Naive thymus-derived CD8-positive, alpha-beta T cell (primary cell): ENCODE measurements at regions of chr17 and their contacts with region 1.

Region 1: DNA sequence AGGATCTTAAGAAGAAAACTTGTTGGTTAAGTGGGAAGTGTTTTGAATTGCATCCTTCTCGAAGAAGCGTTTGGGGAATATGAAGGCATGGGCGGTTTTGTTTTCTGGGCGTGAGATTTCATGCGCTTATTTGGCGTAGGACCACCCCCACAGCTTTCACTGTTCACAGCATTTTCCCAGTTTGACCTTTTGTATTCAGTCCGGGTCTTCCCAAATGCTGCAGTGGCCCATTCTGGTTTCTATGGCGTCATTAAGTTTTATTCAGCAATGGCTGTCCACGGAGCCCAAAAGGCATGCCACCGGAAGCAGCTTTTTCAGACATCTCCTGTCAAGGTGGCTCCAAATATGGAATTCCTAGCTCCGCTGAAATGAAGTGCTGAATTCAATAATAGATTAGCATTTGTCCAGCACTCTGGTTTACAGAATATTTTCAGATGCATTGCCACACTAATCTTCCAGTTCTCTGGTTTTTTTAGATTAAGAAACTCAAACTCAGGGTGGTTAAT is 90.6 kb upstream of the FBXO47 start:
- DNase-seq: no peak
- ATAC-seq: no peak
- H3K4me3 Mint-ChIP-seq: peak overlapping the region; percentile 65 to 91 (median 82)
- H3K27ac Mint-ChIP-seq: peak overlapping the region in 5 of 10 donors; percentile 18 to 91 (median 81)
- H3K4me1 Mint-ChIP-seq: peaks cover 3 to 24% (median 11%) of the 10 kb centered on the region in 4 donors
- H3K27me3 Mint-ChIP-seq: peaks cover 0 to 4% (median 2%) of the 10 kb centered on the region in 5 donors

Region 2: GRCh38 chr17:39080421-39081078 is 22.8 kb after region 1 on chr17:
- POLR2A ChIA-PET with region 1: no interaction called
- DNase-seq: no peak
- ATAC-seq: no peak
- H3K4me3 Mint-ChIP-seq: no peak overlapping the region
- H3K27ac Mint-ChIP-seq: no peak overlapping the region
- H3K4me1 Mint-ChIP-seq: peaks cover 0 to 11% (median 4%) of the 10 kb centered on the region in 4 donors
- H3K27me3 Mint-ChIP-seq: no peaks in the 10 kb centered on the region

Region 3: DNA sequence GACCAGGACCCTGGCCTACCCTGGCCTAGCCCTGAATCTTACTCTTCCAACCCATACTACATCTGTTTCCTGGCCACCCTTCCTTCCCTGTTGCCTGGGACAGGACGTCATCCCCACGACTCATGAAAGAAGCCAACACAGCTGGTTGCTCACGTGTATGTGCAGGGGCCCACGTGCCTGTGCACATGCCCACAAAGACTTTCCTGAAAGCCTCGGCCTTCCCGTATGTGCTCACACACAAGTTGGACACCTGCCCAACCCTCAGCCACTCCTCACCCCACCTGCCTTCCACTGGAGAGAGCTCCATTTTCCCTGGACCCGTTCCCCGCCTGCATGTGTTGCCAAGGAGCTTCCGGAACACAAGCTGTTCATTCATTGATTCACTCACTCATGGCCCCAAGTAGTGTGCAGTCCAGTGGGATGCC is 86.7 kb after region 1 on chr17:
- POLR2A ChIA-PET with region 1: interaction called, 11 read pairs
- DNase-seq: no peak
- ATAC-seq: no peak
- H3K4me3 Mint-ChIP-seq: no peak overlapping the region
- H3K27ac Mint-ChIP-seq: peak overlapping the region in 6 of 10 donors; percentile 1 to 84 (median 41)
- H3K4me1 Mint-ChIP-seq: peaks cover 11 to 39% (median 30%) of the 10 kb centered on the region in 4 donors
- H3K27me3 Mint-ChIP-seq: no peaks in the 10 kb centered on the region